ENCODE measurements at regions of chr1 and their contacts with region 1.

Region 1: DNA sequence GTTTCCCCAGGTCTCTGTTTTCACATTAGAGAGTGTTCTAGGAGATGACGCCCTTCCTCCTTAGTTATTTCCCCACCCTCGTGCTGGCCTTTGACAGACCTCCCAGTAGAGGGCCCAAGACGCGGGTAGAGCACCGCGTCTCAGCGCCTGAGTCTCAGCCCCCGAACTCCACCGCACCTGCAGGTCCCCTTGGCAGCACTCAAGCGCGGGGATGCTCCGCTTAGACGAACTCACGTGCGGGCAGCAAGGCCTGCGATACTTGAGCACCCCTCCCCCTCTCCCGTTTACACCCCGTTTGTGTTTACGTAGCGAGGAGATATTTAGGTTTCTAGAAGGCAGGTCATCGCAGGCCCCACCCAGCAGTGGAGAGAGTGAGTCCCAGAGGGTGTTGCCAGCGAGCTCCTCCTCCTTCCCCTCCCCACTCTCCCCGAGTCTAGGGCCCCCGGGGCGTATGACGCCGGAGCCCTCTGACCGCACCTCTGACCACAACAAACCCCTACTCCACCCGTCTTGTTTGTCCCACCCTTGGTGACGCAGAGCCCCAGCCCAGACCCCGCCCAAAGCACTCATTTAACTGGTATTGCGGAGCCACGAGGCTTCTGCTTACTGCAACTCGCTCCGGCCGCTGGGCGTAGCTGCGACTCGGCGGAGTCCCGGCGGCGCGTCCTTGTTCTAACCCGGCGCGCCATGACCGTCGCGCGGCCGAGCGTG is at the start of gene CD55:
- DNase-seq: peak; percentile 100
- ATAC-seq: peak; percentile 86
- H3K4me3 ChIP-seq: peak within 1 kb of the TSS; percentile 77
- H3K27ac ChIP-seq: peak within 1 kb of the TSS; percentile 88
- H3K4me1 ChIP-seq: peaks cover 41% of the 10 kb centered on the region
- H3K27me3 ChIP-seq: no peaks in the 10 kb centered on the region
- CTCF ChIP-seq: peak; percentile 72
- total RNA-seq, gene CD55: 101 and 108 TPM in 2 replicates

Region 2: GRCh38 chr1:206941858-206942387 is 379.3 kb before region 1 on chr1:
- CTCF ChIA-PET with region 1: no interaction called
- POLR2A ChIA-PET with region 1: no interaction called
- intact Hi-C with region 1: no loop called
- DNase-seq: no peak
- ATAC-seq: no peak
- H3K4me3 ChIP-seq: no peak overlapping the region
- H3K27ac ChIP-seq: no peak overlapping the region
- H3K4me1 ChIP-seq: no peaks in the 10 kb centered on the region
- H3K27me3 ChIP-seq: peaks cover 19% of the 10 kb centered on the region; the same call in 1 of the 2 replicates
- CTCF ChIP-seq: no peak

Region 3: DNA sequence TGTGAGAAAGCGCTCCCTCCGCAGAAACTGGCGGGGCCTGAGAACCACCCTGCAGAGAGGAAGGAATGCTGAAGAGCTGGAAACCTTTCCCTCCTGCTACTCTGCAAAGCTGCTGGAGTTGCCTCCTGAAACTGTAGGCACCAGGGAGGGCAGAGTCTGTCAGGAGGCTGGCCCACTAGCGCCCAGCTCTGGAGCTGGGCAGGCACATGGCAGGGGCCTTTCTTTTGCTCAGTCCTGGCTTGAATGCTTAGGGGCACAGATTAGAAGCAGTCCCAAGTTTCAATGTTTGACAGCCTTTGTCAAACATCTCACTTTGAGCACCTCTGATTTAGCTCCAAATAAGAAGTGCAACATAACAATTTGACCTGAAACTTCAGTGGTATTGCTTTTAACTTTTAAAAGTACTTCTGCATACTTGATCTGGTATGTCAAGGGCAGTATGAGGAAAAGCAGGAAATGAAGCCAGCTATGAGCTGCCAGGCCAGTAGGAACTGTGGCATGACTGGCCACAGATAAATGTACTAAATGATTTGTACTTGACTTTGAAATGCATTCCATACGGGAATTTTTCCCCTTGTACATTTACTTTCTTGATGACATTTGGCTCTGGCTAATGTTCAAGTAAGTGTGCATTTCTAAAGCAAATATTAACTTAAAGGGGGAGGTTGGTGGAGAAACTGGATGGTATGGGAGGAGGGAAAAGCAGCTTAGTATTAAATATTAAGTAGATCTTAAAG is 295.9 kb before region 1 on chr1:
- CTCF ChIA-PET with region 1: no interaction called
- POLR2A ChIA-PET with region 1: interaction called, 3 read pairs
- intact Hi-C with region 1: loop called (anchors 5 kb)
- DNase-seq: peak; percentile 99
- ATAC-seq: peak; percentile 18
- H3K4me3 ChIP-seq: peak overlapping the region; percentile 2; the same call in 1 of the 2 replicates
- H3K27ac ChIP-seq: peak overlapping the region; percentile 95
- H3K4me1 ChIP-seq: peaks cover 98% of the 10 kb centered on the region
- H3K27me3 ChIP-seq: no peaks in the 10 kb centered on the region
- CTCF ChIP-seq: 0 out of 2 replicates have a peak, but pooled peaks have one; percentile 11

Region 4: DNA sequence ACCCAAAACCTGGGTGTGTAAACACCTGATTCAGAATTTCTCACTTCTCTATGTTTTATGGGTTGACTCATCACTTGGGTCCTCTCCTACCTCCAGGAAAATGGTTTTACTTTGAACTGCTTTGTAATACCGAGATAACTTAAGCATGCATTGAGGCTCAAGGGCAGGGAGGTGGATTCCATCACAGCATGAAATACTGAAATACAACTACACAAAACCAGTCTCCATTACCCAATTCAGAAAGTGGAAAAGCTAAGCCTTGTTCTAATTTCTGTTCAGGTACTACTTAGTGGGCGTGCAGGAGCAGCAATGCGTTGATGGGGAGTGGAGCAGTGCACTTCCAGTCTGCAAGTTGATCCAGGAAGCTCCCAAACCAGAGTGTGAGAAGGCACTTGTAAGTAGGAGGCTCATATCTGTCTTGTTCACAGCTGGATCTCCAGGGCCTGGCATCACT is 223.3 kb before region 1 on chr1:
- CTCF ChIA-PET with region 1: interaction called, 12 read pairs
- POLR2A ChIA-PET with region 1: interaction called, 9 read pairs
- intact Hi-C with region 1: no loop called
- DNase-seq: peak; percentile 89
- ATAC-seq: peak; percentile 93
- H3K4me3 ChIP-seq: no peak overlapping the region
- H3K27ac ChIP-seq: no peak overlapping the region
- H3K4me1 ChIP-seq: peaks cover 9% of the 10 kb centered on the region
- H3K27me3 ChIP-seq: peaks cover 12% of the 10 kb centered on the region
- CTCF ChIP-seq: no peak

Region 5: GRCh38 chr1:207221934-207222351 is 99.3 kb before region 1 on chr1:
- CTCF ChIA-PET with region 1: interaction called, 3 read pairs
- POLR2A ChIA-PET with region 1: no interaction called
- intact Hi-C with region 1: loop called (anchors 5 kb)
- DNase-seq: peak; percentile 97
- ATAC-seq: peak; percentile 84
- H3K4me3 ChIP-seq: no peak overlapping the region
- H3K27ac ChIP-seq: peak overlapping the region; percentile 69
- H3K4me1 ChIP-seq: peaks cover 48% of the 10 kb centered on the region
- H3K27me3 ChIP-seq: no peaks in the 10 kb centered on the region
- CTCF ChIP-seq: no peak

Region 6: DNA sequence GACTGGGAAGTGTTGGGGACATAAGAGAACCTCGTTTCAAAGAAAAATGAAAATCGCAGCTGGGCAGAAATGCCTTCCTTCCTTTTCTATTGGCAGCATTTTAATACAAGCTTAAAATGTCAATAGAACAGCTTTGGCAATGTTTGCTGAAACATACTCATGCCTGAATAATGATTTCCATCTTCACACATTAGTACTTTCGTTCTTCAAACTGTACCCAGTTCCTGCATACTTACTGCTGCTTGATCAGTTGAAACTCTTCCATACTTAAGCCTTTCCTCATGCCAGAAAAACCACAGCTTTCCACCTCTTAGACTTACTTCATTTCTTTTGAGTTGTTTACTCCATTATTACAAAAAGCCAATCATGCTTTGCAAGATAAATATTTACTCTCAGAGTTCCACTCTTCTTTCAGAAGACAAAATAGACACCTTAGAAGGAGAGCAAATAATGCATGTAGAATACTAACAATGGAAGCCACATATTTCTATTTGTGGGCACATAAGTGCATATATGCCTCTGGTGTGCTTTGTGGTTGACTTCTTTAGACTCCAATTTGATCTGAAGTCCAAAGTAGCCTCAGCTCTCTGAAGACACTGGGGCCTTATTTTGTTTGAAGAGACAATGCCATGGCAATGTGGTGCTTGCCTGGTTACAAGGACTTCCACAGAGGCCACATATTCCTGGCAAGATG is 22.4 kb before region 1 on chr1:
- CTCF ChIA-PET with region 1: interaction called, 3 read pairs
- POLR2A ChIA-PET with region 1: interaction called, 9 read pairs
- intact Hi-C with region 1: loop called (anchors 1 kb)
- DNase-seq: peak; percentile 86
- ATAC-seq: peak; percentile 93
- H3K4me3 ChIP-seq: peak overlapping the region; percentile 24; the same call in 1 of the 2 replicates
- H3K27ac ChIP-seq: peak overlapping the region; percentile 57
- H3K4me1 ChIP-seq: peaks cover 28% of the 10 kb centered on the region
- H3K27me3 ChIP-seq: no peaks in the 10 kb centered on the region
- CTCF ChIP-seq: no peak

Region 7: DNA sequence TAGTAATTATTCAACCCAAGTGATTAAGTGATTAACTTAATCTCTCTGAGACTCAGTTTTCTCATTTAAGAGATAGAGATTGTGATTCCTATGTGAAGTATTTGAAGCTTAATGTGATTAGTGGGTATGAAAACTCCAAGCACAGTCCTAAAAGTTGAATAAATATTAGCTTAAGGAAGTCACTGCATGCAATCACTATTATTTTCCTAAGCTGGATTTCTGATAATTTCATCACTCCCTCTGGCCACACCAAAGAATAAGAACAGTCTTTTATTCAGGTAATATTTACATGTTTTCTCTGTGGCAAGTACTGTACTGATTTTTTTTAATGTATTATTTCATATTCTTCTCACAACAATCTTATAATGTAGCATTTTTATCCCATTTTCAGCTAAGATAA is 31.3 kb after region 1 on chr1:
- CTCF ChIA-PET with region 1: interaction called, 3 read pairs
- POLR2A ChIA-PET with region 1: interaction called, 7 read pairs
- intact Hi-C with region 1: loop called (anchors 1 kb)
- DNase-seq: no peak
- ATAC-seq: peak; percentile 67
- H3K4me3 ChIP-seq: no peak overlapping the region
- H3K27ac ChIP-seq: no peak overlapping the region
- H3K4me1 ChIP-seq: peaks cover 6% of the 10 kb centered on the region
- H3K27me3 ChIP-seq: no peaks in the 10 kb centered on the region
- CTCF ChIP-seq: no peak

Region 8: DNA sequence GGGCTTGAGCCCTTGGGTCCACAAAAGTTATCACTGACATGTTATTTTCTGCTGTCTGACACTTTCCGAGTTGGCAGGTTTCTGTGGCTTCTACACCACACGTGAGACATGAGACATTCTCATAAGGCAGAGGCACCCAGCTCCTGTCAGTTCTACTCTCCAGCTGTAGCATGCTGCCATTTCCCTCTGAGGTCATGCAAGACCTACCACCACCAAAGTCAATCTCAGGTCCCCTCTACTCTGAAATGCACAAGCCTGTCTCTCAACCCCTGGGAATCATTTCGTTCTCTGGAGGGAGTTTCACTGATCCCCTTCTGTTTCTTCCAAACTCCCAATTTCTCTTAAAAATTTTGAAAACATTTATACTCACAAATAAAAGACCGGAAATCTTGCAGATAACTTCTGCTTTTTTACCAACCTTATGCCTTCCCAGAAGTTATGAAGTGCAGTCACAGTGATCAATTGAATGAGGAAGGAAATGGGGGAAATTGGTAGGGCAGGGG is 93.4 kb after region 1 on chr1:
- CTCF ChIA-PET with region 1: no interaction called
- POLR2A ChIA-PET with region 1: no interaction called
- intact Hi-C with region 1: no loop called
- DNase-seq: no peak
- ATAC-seq: no peak
- H3K4me3 ChIP-seq: no peak overlapping the region
- H3K27ac ChIP-seq: no peak overlapping the region
- H3K4me1 ChIP-seq: no peaks in the 10 kb centered on the region
- H3K27me3 ChIP-seq: peaks cover 39% of the 10 kb centered on the region
- CTCF ChIP-seq: no peak

Region 9: DNA sequence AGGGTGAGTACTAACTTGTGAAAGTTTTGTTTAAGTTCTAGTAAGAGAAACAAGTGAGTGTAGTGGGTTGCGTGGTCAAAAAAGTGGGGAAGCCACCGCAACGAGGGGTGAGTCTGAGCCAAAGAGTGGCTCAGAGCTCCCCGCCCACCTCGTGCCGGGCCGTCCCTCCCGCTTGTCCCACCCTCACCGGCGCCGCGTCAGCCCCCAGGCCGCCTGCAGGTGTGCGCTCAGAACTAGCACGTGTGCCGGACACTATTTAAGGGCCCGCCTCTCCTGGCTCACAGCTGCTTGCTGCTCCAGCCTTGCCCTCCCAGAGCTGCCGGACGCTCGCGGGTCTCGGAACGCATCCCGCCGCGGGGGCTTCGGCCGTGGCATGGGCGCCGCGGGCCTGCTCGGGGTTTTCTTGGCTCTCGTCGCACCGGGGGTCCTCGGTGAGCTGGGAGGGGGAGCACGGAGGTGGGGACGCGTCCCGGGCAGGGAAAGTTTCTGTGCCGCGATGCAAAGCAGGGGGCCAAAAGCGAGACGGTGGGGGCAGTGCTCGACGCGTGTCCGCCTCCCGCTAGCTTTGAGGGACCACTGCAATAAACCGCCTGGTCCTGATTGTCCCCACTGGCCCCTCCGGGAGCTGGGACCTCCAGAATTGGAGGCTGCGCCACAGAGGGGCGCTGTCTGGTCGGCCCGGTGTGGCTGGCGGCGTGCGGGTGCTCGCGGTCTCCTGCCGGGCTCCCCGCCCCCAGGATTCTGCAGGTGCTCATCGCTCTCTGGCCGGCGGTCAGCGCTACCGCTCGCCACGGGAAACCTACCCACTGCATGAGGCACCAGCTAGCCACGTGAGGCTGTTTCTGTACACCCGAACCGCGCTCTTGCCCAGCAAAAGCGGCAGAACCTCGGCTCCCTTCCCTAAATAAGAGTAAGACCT is 133.1 kb after region 1 on chr1 and contains the start of gene CR2:
- CTCF ChIA-PET with region 1: no interaction called
- POLR2A ChIA-PET with region 1: no interaction called
- intact Hi-C with region 1: no loop called
- DNase-seq: no peak
- ATAC-seq: peak; percentile 69
- H3K4me3 ChIP-seq: no peak within 1 kb of the TSS
- H3K27ac ChIP-seq: no peak within 1 kb of the TSS
- H3K4me1 ChIP-seq: no peaks in the 10 kb centered on the region
- H3K27me3 ChIP-seq: peaks cover 99% of the 10 kb centered on the region
- CTCF ChIP-seq: peak; percentile 26; the same call in 1 of the 2 replicates
- total RNA-seq, gene CR2: not detected in 2 replicates

Region 10: DNA sequence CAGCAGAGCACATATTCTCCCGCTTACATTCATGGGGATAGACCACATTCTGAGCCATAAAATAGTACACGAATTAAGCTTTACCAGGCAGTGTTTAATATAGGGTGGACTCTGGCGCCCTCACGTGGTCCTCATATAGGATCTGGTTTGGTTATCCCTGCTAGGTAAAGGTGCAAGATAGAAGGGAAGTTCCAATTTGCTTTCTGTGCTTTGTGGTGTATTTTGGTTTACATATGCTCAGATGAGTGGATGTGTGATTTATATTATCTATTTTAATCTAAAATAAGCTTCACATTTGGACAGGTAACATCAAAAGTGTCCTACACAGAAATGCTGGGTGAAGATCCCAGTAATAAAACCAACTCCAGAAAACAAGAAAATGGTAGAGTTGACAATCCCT is 178.3 kb after region 1 on chr1:
- CTCF ChIA-PET with region 1: no interaction called
- POLR2A ChIA-PET with region 1: interaction called, 4 read pairs
- intact Hi-C with region 1: loop called (anchors 5 kb)
- DNase-seq: peak; percentile 90
- ATAC-seq: peak; percentile 99
- H3K4me3 ChIP-seq: no peak overlapping the region
- H3K27ac ChIP-seq: no peak overlapping the region
- H3K4me1 ChIP-seq: no peaks in the 10 kb centered on the region
- H3K27me3 ChIP-seq: peaks cover 80% of the 10 kb centered on the region
- CTCF ChIP-seq: peak; percentile 99

Measured in PC-3 (cell line).